ENCODE measurements at regions of chr6 and their contacts with region 1.

Region 1: DNA sequence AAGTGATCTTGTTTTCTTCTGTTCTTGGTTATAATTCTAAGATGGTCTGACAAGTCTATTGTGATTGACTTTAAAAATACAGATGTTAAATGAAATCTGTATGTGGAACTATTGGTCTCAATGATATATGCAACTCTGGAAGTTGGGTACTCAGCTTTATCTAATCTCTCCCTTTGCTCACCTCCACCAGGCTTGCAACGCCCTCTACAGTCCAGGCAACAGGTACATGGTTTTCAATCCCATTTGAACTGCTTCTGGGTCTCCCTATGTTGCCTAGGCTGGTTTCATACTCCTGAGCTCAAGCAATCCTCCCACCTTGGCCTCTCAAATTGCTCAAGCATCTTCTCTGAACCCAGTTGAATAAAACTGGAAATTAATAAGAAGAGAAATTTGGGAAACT is 25.6 kb upstream of the HLA-DQB1 start:
- DNase-seq: peak; percentile 85
- ATAC-seq: peak; percentile 90
- H3K4me3 Mint-ChIP-seq: no peak overlapping the region
- H3K27ac Mint-ChIP-seq: no peak overlapping the region
- H3K4me1 Mint-ChIP-seq: peaks cover 18% of the 10 kb centered on the region
- H3K27me3 Mint-ChIP-seq: peaks cover 55% of the 10 kb centered on the region

Region 2: DNA sequence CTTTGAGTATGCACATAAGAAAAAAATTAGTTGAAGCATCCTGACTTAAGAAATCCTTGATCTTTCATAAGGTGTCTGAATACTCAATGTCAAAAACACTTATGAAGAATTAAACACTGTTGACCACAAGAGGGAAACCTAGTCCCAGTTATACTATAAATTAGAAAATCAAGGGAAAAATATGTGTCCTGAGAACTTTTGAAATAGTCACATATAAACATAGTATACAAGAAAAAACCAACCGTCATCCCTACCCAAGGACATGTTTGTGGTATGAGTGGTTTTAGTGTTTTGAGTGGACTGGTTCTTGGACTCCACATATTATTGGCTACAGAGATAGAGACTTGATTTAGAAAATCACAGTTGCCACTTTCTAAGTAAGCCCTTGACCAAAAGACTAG is 260.0 kb before region 1 on chr6:
- CTCF ChIA-PET with region 1: interaction called, 45 read pairs
- DNase-seq: no peak
- ATAC-seq: peak; percentile 42
- H3K4me3 Mint-ChIP-seq: no peak overlapping the region
- H3K27ac Mint-ChIP-seq: no peak overlapping the region
- H3K4me1 Mint-ChIP-seq: peaks cover 2% of the 10 kb centered on the region
- H3K27me3 Mint-ChIP-seq: peaks cover 26% of the 10 kb centered on the region

Region 3: DNA sequence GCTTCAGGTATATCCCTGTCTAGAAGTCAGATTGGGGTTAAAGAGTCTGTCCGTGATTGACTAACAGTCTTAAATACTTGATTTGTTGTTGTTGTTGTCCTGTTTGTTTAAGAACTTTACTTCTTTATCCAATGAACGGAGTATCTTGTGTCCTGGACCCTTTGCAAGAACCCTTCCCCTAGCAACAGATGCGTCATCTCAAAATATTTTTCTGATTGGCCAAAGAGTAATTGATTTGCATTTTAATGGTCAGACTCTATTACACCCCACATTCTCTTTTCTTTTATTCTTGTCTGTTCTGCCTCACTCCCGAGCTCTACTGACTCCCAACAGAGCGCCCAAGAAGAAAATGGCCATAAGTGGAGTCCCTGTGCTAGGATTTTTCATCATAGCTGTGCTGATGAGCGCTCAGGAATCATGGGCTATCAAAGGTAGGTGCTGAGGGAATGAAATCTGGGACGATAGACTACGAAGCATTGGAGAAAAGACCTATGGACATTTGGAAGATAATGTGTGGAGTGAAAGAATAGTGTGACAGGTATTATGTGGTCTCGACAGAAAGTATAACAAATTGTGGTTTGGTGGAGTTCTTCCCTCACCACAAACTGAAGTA is 252.3 kb before region 1 on chr6 and contains the start of gene HLA-DRA:
- CTCF ChIA-PET with region 1: interaction called, 45 read pairs
- DNase-seq: peak; percentile 60
- ATAC-seq: peak; percentile 92
- H3K4me3 Mint-ChIP-seq: peak within 1 kb of the TSS; percentile 99
- H3K27ac Mint-ChIP-seq: peak within 1 kb of the TSS; percentile 97
- H3K4me1 Mint-ChIP-seq: peaks cover 60% of the 10 kb centered on the region
- H3K27me3 Mint-ChIP-seq: no peaks in the 10 kb centered on the region
- total RNA-seq, gene HLA-DRA: 311 to 313 TPM

Region 4: DNA sequence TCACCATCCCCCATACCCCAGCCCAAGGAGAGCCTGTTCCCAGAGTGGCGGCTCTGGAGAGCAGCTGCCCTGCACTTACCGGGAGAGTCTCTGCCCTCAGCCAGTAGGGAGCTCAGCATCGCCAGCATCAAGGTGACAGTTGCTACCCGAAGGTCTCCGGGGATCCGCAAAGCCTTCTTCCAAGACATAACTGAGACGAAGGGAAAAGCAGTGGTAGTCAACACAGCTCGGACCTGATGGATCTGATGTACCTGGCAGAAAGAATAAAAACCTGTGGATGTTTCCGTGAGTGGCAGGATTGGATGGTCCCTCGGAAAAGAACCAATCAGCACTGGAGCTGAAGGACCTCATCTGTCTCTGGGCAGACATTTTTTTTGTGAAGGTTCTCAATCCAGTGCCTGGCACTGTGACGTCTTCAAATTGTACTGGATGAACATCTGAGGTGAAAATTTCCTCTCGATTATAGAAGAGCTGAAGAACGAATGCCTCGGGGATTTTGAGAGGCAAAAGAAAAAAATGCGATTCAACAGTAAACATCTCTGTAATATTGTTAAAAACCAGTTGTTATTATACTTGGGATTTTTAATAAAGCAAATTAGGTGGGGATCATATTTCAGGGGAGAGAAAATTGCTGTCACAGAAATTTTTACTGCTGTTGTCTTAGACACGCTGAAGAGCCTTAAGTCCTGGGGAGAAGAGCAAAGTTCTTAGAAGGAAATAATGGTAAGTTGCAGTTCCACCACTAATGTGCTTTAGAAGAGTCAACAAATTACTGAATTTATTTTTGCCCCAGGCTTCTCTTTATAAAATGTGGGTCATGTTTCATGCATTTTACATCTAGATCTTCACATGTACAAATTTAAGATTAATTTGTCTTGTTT is 25.4 kb before region 1 on chr6 and contains the start of gene HLA-DQB1:
- CTCF ChIA-PET with region 1: interaction called, 12 read pairs
- DNase-seq: peak; percentile 84
- ATAC-seq: peak; percentile 77
- H3K4me3 Mint-ChIP-seq: peak within 1 kb of the TSS; percentile 90
- H3K27ac Mint-ChIP-seq: peak within 1 kb of the TSS; percentile 89
- H3K4me1 Mint-ChIP-seq: peaks cover 57% of the 10 kb centered on the region
- H3K27me3 Mint-ChIP-seq: peaks cover 14% of the 10 kb centered on the region
- total RNA-seq, gene HLA-DQB1: 72.9 to 89.8 TPM

Region 5: GRCh38 chr6:32906539-32906938 is 214.5 kb after region 1 on chr6:
- CTCF ChIA-PET with region 1: no interaction called
- DNase-seq: no peak
- ATAC-seq: no peak
- H3K4me3 Mint-ChIP-seq: no peak overlapping the region
- H3K27ac Mint-ChIP-seq: no peak overlapping the region
- H3K4me1 Mint-ChIP-seq: no peaks in the 10 kb centered on the region
- H3K27me3 Mint-ChIP-seq: peaks cover 4% of the 10 kb centered on the region